HCT116 (cell line): ENCODE measurements at regions of chr10 and their contacts with region 1.

Region 1: GRCh38 chr10:120793088-120793487 is 58.1 kb upstream of the WDR11 start:
- DNase-seq: no peak
- ATAC-seq: no peak
- H3K4me3 ChIP-seq: no peak overlapping the region
- H3K27ac ChIP-seq: no peak overlapping the region
- H3K4me1 ChIP-seq: no peaks in the 10 kb centered on the region
- H3K27me3 ChIP-seq: peaks cover 34% of the 10 kb centered on the region
- CTCF ChIP-seq: no peak
- POLR2A ChIP-seq: no peak
- RAD21 ChIP-seq: no peak

Region 2: GRCh38 chr10:120530699-120531098 is 262.4 kb before region 1 on chr10:
- CTCF ChIA-PET with region 1: no interaction called
- POLR2A ChIA-PET with region 1: no interaction called
- RAD21 ChIA-PET with region 1: interaction called in 1 of 2 experiments, 11 read pairs
- intact Hi-C with region 1: no loop called
- DNase-seq: no peak
- ATAC-seq: no peak
- H3K4me3 ChIP-seq: no peak overlapping the region
- H3K27ac ChIP-seq: no peak overlapping the region
- H3K4me1 ChIP-seq: no peaks in the 10 kb centered on the region
- H3K27me3 ChIP-seq: peaks cover 37% of the 10 kb centered on the region
- CTCF ChIP-seq: no peak
- POLR2A ChIP-seq: no peak
- RAD21 ChIP-seq: no peak

Region 3: DNA sequence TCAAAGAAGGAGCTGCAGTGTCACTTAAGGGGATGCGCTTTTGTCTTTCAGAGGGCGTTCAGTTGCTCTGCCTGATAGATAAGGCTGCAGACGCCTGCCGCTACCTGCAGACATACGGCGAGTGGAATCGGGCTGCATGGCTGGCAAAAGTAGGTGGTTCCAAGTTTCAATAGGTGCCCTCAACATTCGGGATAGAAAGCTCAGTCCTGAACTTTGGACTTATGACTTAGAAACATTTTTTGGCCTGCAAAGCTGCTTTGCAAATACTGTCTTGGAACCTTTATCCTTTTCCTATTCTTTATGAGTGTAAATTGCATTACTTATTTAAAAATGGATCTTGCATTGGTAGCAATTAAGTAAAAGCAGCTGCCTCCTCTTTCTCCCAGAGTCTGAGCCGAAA is 112.2 kb after region 1 on chr10:
- CTCF ChIA-PET with region 1: no interaction called
- POLR2A ChIA-PET with region 1: no interaction called
- RAD21 ChIA-PET with region 1: no interaction called
- intact Hi-C with region 1: no loop called
- DNase-seq: no peak
- ATAC-seq: no peak
- H3K4me3 ChIP-seq: no peak overlapping the region
- H3K27ac ChIP-seq: no peak overlapping the region
- H3K4me1 ChIP-seq: no peaks in the 10 kb centered on the region
- H3K27me3 ChIP-seq: no peaks in the 10 kb centered on the region
- CTCF ChIP-seq: no peak
- POLR2A ChIP-seq: no peak
- RAD21 ChIP-seq: no peak